ENCODE measurements at regions of chr1 and their contacts with region 1.

Region 1: DNA sequence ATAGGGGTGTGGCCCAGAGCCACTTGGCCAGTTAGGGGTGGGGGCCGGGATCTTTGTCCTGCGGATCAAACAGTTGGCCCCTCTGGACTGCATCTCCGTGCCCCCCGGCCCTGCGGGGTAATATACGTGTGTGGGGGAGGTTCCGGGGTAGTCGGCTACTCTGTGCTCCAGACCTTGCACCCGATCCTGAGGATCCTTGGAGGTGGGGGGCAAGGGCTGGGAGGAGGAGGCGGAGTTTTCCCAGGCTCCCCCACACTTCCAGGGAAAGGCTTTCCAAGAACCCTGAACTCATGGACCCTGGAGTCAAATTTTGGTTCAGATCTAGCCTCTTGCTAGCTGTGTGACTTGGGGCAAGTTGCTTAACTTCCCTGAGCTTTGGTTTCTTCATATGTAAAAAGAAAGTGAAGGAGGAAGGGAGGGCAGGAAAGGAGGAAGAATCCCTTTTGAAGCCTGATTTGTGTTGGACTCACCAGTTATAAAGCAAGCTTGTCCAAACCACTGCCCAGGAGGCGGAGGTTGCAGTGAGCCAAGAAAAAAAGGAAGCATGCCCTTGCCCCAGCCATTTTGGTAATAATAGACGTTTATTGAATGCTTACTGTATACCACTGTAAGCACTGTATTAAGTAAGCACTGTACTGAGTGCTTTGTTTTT is 686 bp downstream of the MIIP start:
- DNase-seq: no peak
- ATAC-seq: no peak
- H3K4me3 Mint-ChIP-seq: peak overlapping the region; percentile 88
- H3K27ac Mint-ChIP-seq: peak overlapping the region; percentile 37
- H3K4me1 Mint-ChIP-seq: peaks cover 14% of the 10 kb centered on the region
- H3K27me3 Mint-ChIP-seq: no peaks in the 10 kb centered on the region
- CTCF ChIP-seq: no peak

Region 2: GRCh38 chr1:11654137-11654938 is 365.6 kb before region 1 on chr1 and contains the starts of genes FBXO2 and FBXO44:
- CTCF ChIA-PET with region 1: no interaction called
- POLR2A ChIA-PET with region 1: no interaction called
- intact Hi-C with region 1: loop called (anchors 1 kb)
- DNase-seq: peak; percentile 60
- ATAC-seq: peak; percentile 85
- H3K4me3 Mint-ChIP-seq: peak within 1 kb of the TSS; percentile 80
- H3K27ac Mint-ChIP-seq: no peak within 1 kb of the TSS
- H3K4me1 Mint-ChIP-seq: peaks cover 29% of the 10 kb centered on the region
- H3K27me3 Mint-ChIP-seq: no peaks in the 10 kb centered on the region
- CTCF ChIP-seq: no peak
- total RNA-seq, gene FBXO2: 4.2 and 4.6 TPM in 2 replicates
- total RNA-seq, gene FBXO44: 27.2 and 29.9 TPM in 2 replicates

Region 3: DNA sequence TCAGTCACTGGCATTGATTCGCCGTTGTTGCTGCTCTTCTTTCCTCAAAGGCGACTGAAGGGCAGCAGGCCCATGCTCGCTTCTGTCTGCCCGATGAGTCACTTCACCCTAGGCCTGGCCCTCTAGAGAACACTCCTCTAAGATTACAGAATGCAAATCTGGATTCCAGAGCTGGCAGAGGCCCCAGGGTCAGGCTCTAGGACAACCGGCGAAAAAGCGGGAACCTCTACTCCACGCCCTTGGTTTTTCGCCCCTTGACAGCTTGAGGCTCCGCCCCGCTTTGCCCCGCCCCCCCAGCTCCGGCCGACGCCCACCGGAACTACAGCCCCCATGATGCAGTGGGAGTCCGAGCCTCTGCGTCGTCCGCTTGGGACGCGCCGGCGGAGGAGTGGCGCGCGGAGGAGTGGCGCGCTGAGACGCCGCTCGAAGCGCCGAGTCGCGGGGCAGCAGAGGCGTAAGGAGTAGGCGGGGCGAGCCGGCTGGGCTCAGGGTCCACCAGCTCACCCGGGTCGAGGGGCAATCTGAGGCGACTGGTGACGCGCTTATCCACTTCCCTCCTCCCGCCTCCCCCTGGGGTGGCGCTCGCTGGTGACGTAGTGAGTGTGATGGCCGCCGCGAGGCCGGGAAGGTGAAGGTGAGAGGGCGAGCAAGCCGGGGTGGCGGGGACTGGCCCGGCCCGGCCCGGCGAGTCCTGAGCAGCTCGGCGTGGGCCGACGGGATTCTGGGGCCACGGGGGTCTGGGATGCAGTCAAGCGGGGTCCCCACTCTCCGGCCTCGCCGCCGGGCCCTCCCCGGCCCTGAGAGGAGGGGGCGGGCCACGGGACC is 39.9 kb before region 1 on chr1 and contains the start of gene MFN2:
- CTCF ChIA-PET with region 1: no interaction called
- POLR2A ChIA-PET with region 1: interaction called, 14 read pairs
- intact Hi-C with region 1: loop called (anchors 1 kb)
- DNase-seq: peak; percentile 95
- ATAC-seq: peak; percentile 95
- H3K4me3 Mint-ChIP-seq: peak within 1 kb of the TSS; percentile 90
- H3K27ac Mint-ChIP-seq: peak within 1 kb of the TSS; percentile 85
- H3K4me1 Mint-ChIP-seq: peaks cover 34% of the 10 kb centered on the region
- H3K27me3 Mint-ChIP-seq: no peaks in the 10 kb centered on the region
- CTCF ChIP-seq: no peak
- total RNA-seq, gene MFN2: 46.5 and 54.1 TPM in 2 replicates

Region 4: DNA sequence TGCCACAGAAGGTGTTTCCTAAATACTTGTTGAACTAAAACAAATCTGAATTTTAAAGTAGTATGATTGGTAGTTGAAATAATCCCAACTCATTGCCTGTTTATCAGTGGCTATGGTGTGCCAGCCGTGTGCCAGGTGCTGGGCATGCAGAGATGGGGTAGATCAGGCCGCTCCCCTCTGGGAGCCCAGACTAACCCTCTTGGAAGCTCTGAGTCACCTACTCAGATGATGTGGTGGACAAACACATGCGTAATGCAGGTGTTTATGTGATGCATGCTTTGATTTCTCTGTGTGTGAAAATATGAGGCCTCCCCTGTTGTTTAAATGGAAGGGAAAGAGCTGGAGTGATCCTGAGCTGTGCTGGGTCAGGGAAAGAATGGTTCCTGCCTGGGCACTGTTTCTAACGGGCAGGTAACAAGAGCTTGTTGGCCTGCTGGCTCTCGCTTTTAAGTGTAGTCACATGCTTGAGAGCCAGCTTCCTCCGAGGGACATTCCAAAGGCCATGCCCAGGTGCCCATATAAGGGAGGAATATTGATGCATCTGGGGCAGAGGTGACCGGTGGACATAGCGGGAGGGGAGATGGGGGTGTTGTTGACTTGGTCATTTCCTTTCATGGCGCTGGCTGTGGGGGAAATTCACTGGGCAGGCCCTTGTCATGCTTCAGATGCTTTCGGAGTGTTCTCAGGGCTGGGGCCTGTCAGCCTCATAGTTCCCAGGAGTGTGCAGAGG is 29.5 kb before region 1 on chr1:
- CTCF ChIA-PET with region 1: no interaction called
- POLR2A ChIA-PET with region 1: no interaction called
- intact Hi-C with region 1: no loop called
- DNase-seq: no peak
- ATAC-seq: no peak
- H3K4me3 Mint-ChIP-seq: no peak overlapping the region
- H3K27ac Mint-ChIP-seq: no peak overlapping the region
- H3K4me1 Mint-ChIP-seq: peaks cover 3% of the 10 kb centered on the region
- H3K27me3 Mint-ChIP-seq: no peaks in the 10 kb centered on the region
- CTCF ChIP-seq: no peak

Region 5: GRCh38 chr1:12040457-12041051 is 20.6 kb after region 1 on chr1:
- CTCF ChIA-PET with region 1: no interaction called
- POLR2A ChIA-PET with region 1: interaction called, 35 read pairs
- intact Hi-C with region 1: loop called (anchors 1 kb)
- DNase-seq: no peak
- ATAC-seq: peak; percentile 85
- H3K4me3 Mint-ChIP-seq: peak overlapping the region; percentile 73
- H3K27ac Mint-ChIP-seq: peak overlapping the region; percentile 88
- H3K4me1 Mint-ChIP-seq: peaks cover 48% of the 10 kb centered on the region
- H3K27me3 Mint-ChIP-seq: no peaks in the 10 kb centered on the region
- CTCF ChIP-seq: no peak

Region 6: DNA sequence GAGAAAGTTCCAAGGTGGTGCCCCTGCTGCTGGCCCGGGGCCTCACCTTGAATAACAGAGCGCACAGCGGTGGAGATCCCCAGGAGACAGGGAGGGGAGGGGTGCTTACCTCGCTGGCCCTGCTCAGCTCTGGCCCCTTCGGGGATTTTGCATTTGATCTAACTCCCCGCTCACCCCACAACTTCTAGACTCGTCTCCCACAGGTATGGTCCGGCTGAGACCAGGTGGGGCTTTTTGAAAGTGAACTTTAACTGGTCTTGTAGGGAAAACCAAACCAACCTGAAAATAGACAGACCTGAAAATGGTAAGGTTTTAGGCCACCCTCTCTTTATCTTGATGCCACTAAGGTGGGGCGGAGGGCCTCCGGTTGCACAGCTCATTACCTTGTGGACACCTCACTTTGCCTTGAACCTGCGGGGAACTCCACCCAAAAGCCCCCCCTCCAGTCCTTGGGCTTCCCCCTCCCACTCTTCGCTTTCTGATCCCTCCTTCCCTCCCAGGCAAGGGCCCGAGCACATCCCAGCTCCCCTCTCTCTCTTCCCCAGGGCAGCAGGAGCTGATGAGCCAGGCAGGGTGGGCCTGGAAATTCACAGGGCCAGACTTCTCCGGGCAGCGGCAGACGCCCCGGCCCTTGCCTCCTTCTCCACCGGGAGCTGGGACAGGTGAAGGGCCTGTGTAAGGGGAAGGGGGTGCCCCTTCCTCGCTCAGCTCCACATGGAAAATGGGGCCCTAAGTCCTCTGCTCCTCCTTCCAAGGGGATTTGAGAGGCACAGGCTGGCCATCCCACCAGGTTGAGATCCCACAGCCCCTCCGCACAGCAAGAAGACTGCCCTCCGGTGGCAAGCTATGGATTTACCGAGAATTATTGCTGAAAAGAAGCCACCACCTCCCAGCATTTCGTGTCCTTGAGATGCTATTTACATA is 59.2 kb after region 1 on chr1:
- CTCF ChIA-PET with region 1: interaction called, 16 read pairs
- POLR2A ChIA-PET with region 1: interaction called, 31 read pairs
- intact Hi-C with region 1: loop called (anchors 1 kb)
- DNase-seq: peak; percentile 35
- ATAC-seq: peak; percentile 76
- H3K4me3 Mint-ChIP-seq: peak overlapping the region; percentile 70
- H3K27ac Mint-ChIP-seq: peak overlapping the region; percentile 87
- H3K4me1 Mint-ChIP-seq: peaks cover 38% of the 10 kb centered on the region
- H3K27me3 Mint-ChIP-seq: no peaks in the 10 kb centered on the region
- CTCF ChIP-seq: no peak

Region 7: DNA sequence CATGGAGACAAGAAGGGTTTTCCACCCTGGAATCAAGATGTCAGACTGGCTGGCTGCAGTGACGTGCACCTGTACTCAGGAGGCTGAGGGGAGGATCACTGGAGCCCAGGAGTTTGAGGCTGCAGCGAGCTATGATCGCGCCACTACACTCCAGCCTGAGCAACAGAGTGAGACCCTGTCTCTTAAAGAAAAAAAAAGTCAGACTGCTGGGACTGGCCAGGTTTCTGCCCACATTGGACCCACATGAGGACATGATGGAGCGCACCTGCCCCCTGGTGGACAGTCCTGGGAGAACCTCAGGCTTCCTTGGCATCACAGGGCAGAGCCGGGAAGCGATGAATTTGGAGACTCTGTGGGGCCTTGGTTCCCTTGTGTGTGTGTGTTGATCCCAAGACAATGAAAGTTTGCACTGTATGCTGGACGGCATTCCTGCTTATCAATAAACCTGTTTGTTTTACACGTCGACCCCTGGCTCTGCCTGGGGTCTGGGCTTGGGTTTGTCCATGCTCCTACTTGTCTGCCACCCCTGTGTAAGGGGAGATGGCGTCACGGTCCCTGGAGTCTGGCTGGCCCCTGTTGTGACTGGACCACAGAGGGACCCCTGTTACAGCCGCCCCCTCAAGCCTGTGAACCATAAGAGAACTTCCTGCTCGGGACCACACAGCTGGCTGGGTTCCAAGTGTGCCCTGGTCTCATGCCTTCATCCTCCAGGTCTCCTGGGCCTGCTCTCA is 188.9 kb after region 1 on chr1:
- CTCF ChIA-PET with region 1: no interaction called
- POLR2A ChIA-PET with region 1: interaction called, 14 read pairs
- intact Hi-C with region 1: no loop called
- DNase-seq: peak; percentile 81
- ATAC-seq: peak; percentile 71
- H3K4me3 Mint-ChIP-seq: peak overlapping the region; percentile 52
- H3K27ac Mint-ChIP-seq: peak overlapping the region; percentile 86
- H3K4me1 Mint-ChIP-seq: peaks cover 64% of the 10 kb centered on the region
- H3K27me3 Mint-ChIP-seq: no peaks in the 10 kb centered on the region
- CTCF ChIP-seq: peak; percentile 76

Region 8: GRCh38 chr1:12405325-12406210 is 385.6 kb after region 1 on chr1:
- CTCF ChIA-PET with region 1: no interaction called
- POLR2A ChIA-PET with region 1: no interaction called
- intact Hi-C with region 1: no loop called
- DNase-seq: no peak
- ATAC-seq: no peak
- H3K4me3 Mint-ChIP-seq: no peak overlapping the region
- H3K27ac Mint-ChIP-seq: no peak overlapping the region
- H3K4me1 Mint-ChIP-seq: peaks cover 2% of the 10 kb centered on the region
- H3K27me3 Mint-ChIP-seq: no peaks in the 10 kb centered on the region
- CTCF ChIP-seq: no peak

Measured in activated B cell treated with CpG ODN at 0.5 μM for 24 hours (primary cell).